ENCODE measurements at regions of chr3 and their contacts with region 1.

Region 1: GRCh38 chr3:89795506-89795905 is 688.1 kb downstream of the EPHA3 start:
- DNase-seq: no peak
- H3K4me3 Mint-ChIP-seq: no peak overlapping the region
- H3K27ac Mint-ChIP-seq: no peak overlapping the region
- H3K4me1 Mint-ChIP-seq: no peaks in the 10 kb centered on the region
- H3K27me3 Mint-ChIP-seq: no peaks in the 10 kb centered on the region

Region 2: DNA sequence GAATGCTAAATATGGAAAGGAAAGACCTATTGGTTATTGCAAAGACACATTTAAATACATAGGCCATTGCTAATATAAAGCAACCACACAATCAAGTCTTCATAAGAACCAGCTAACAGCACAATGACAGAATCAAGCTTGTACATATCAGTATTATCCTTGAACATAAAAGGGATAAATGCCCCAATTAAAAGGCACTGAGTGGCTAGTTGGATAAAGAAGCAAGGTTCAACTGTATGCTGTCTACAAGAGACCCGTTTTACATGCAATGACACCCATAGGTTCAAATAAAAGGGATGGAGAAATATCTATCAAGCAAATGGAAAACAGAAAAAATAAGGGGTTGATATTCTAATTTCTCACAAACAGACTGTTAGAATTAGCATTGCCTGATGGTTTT is 18.0 kb after region 1 on chr3:
- CTCF ChIA-PET with region 1: no interaction called
- intact Hi-C with region 1: loop called (anchors 2 kb)
- DNase-seq: no peak
- H3K4me3 Mint-ChIP-seq: no peak overlapping the region
- H3K27ac Mint-ChIP-seq: no peak overlapping the region
- H3K4me1 Mint-ChIP-seq: no peaks in the 10 kb centered on the region
- H3K27me3 Mint-ChIP-seq: no peaks in the 10 kb centered on the region